ENCODE measurements at regions of chr3 and their contacts with region 1.

Region 1: GRCh38 chr3:65201926-65202325 is 514.1 kb upstream of the ADAMTS9 start:
- DNase-seq: no peak
- ATAC-seq: no peak
- H3K4me3 ChIP-seq: no peak overlapping the region
- H3K27ac ChIP-seq: no peak overlapping the region
- H3K4me1 ChIP-seq: no peaks in the 10 kb centered on the region
- H3K27me3 ChIP-seq: no peaks in the 10 kb centered on the region
- CTCF ChIP-seq: no peak
- EP300 ChIP-seq: no peak
- POLR2A ChIP-seq: no peak
- RAD21 ChIP-seq: no peak

Region 2: GRCh38 chr3:65230256-65231139 is 28.6 kb after region 1 on chr3:
- CTCF ChIA-PET with region 1: interaction called, 3 read pairs
- POLR2A ChIA-PET with region 1: no interaction called
- RAD21 ChIA-PET with region 1: no interaction called
- SMC1A ChIA-PET with region 1: no interaction called
- in situ Hi-C with region 1: no loop called
- intact Hi-C with region 1: loop called (anchors 1 kb)
- DNase-seq: no peak
- ATAC-seq: no peak
- H3K4me3 ChIP-seq: no peak overlapping the region
- H3K27ac ChIP-seq: no peak overlapping the region
- H3K4me1 ChIP-seq: no peaks in the 10 kb centered on the region
- H3K27me3 ChIP-seq: no peaks in the 10 kb centered on the region
- CTCF ChIP-seq: no peak
- EP300 ChIP-seq: no peak
- POLR2A ChIP-seq: no peak
- RAD21 ChIP-seq: no peak